Common myeloid progenitor, CD34-positive (primary cell): ENCODE measurements at regions of chr11 and their contacts with region 1.

Region 1: DNA sequence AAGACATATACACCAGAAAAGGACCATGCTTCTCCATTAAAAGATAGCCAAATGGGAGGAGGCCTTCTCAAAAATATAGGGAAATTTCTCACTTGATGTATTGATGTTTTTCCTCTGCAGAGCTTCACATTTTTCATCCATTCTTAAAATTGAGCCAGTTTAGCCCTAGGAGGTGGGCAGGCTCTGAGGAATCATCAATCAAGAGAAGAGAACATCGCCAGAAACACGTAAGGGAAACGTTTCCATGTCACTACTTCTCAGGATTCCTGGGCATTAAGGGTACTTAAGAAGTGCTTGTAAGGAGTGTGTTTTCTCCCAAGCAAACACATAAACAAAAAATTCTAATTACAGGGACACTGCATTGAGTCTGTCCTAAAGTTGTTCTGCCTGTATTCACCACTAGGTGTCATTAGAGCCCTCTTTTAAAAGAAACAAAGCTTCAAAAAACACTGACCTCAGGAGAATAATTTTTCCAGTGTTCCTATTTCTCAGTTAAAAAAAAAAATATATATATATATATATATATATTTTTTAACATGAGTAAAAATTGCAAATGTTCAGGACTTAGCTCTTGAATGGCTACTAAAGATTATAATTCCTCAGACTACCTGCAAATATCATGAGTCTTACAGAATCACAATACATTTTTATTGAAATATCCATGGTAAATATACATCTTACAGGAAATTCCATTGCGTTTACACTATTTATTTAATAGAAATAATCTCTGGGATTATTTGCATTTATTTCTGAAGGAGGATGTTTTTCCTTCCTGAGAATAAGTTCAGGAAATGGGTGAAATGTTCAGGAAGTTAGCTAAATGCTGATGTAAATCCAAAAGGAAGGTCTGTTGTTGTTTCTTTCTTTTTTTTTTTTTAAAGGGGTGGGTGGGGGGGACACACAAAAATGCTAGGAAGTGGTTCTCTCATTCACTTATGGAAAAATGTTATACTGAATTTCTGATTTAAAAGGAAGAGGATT is 16.0 kb downstream of the FZD4 start:
- DNase-seq: peak; percentile 52 to 76 (median 66)
- H3K4me3 ChIP-seq: no peak overlapping the region
- H3K27ac ChIP-seq: peak overlapping the region in 1 of 2 experiments; percentile 38
- H3K4me1 ChIP-seq: no peaks in the 10 kb centered on the region
- H3K27me3 ChIP-seq: no peaks in the 10 kb centered on the region

Region 2: GRCh38 chr11:86559311-86559945 is 379.8 kb before region 1 on chr11:
- CTCF ChIA-PET with region 1: no interaction called
- POLR2A ChIA-PET with region 1: no interaction called
- DNase-seq: no peak
- H3K4me3 ChIP-seq: no peak overlapping the region
- H3K27ac ChIP-seq: no peak overlapping the region
- H3K4me1 ChIP-seq: no peaks in the 10 kb centered on the region
- H3K27me3 ChIP-seq: no peaks in the 10 kb centered on the region

Region 3: GRCh38 chr11:86955361-86956120 is 16.4 kb after region 1 on chr11 and contains the start of gene FZD4:
- CTCF ChIA-PET with region 1: interaction called, 18 read pairs
- POLR2A ChIA-PET with region 1: no interaction called
- DNase-seq: peak; percentile 71 to 86 (median 79)
- H3K4me3 ChIP-seq: peak within 1 kb of the TSS; percentile 38 to 90 (median 72)
- H3K27ac ChIP-seq: no peak within 1 kb of the TSS
- H3K4me1 ChIP-seq: peaks cover 0 to 25% (median 19%) of the 10 kb centered on the region in 4 experiments
- H3K27me3 ChIP-seq: peaks cover 4 to 42% (median 11%) of the 10 kb centered on the region in 5 experiments

Region 4: GRCh38 chr11:86990515-86990914 is 51.3 kb after region 1 on chr11:
- CTCF ChIA-PET with region 1: interaction called, 20 read pairs
- POLR2A ChIA-PET with region 1: no interaction called
- DNase-seq: no peak
- H3K4me3 ChIP-seq: no peak overlapping the region
- H3K27ac ChIP-seq: no peak overlapping the region
- H3K4me1 ChIP-seq: no peaks in the 10 kb centered on the region
- H3K27me3 ChIP-seq: no peaks in the 10 kb centered on the region

Region 5: DNA sequence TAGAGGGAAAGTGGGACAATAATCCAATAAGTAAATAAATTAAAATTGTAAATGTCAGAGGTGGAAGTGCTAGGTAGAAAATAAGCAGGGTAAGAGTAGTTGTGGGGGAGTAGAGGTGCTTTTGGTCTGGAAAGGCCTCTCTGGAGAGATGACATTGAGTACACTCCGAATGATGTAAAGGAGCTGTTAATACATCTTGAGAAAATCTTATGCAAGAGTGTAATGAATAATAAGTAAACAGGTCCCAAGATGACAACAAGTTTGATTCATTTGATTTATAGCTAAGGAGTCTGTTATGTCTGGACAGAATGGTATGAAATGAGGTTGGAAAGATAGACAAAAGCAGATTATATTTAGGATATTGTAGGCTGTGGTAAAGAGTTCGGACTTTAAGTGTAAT is 186.1 kb after region 1 on chr11:
- CTCF ChIA-PET with region 1: no interaction called
- POLR2A ChIA-PET with region 1: no interaction called
- DNase-seq: no peak
- H3K4me3 ChIP-seq: no peak overlapping the region
- H3K27ac ChIP-seq: no peak overlapping the region
- H3K4me1 ChIP-seq: no peaks in the 10 kb centered on the region
- H3K27me3 ChIP-seq: no peaks in the 10 kb centered on the region

Region 6: GRCh38 chr11:87284306-87284705 is 345.1 kb after region 1 on chr11:
- CTCF ChIA-PET with region 1: interaction called, 12 read pairs
- POLR2A ChIA-PET with region 1: no interaction called
- DNase-seq: no peak
- H3K4me3 ChIP-seq: no peak overlapping the region
- H3K27ac ChIP-seq: no peak overlapping the region
- H3K4me1 ChIP-seq: no peaks in the 10 kb centered on the region
- H3K27me3 ChIP-seq: no peaks in the 10 kb centered on the region

Region 7: DNA sequence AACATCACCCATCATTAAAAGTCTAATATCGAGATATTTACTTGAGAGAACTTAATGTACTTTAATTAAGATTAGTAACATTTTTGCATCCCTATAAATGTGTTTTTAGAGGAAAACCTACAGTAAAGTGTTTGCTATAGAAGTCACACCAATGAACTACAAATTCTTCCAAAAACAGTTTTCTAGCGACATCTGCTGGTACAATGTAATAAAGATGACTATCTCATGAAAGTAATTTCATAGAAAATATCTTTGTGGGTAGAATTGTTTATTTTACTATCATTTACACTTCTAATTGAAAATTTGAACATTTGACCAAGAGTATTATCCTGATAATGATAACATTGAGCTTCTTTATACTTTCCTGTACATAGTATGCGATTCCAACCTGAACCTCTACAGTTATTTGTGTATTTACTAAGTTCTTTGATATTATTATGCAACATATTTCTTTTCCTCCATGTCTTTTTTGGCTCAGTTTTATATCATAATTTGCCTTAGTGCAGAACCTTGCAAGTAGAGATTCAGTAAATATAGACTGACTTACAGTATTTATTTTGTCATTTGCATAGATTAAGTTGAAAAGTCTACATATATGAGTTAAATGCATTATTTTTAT is 351.2 kb after region 1 on chr11:
- CTCF ChIA-PET with region 1: interaction called, 12 read pairs
- POLR2A ChIA-PET with region 1: no interaction called
- DNase-seq: peak; percentile 63 to 79 (median 73)
- H3K4me3 ChIP-seq: no peak overlapping the region
- H3K27ac ChIP-seq: no peak overlapping the region
- H3K4me1 ChIP-seq: no peaks in the 10 kb centered on the region
- H3K27me3 ChIP-seq: no peaks in the 10 kb centered on the region

Region 8: DNA sequence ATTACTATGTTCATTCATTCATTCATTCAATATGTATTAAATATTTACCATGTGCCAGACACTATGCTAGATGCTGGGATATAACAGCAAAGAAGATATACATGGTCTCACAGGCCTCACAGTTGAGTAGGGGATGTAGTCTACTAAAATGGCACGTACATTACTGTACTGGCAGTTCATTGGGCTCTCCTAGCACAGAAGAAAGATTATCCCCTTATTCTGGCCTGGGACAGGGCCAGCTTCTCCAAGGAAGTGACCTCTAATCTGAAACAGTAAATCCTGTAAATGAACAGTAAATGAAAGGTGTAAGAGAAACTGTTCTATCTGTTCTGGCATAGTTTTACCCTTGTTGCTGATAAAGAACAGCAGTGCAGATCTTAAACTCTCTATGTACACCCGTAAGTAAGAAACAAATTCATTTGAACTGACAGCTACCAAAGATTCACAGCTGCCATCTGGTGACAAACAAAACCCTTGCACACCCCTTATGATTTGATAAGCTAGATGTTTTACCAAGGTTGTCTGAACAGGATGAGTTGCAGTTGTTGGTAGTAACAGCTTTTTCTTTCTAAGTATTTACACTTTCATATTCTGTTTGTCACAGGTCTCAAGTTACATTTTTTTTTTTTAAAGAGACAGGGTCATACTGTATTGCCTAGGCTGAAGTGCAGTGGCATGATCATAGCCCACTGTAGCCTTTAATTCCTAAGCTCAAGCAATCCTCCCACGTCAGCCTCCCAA is 361.6 kb after region 1 on chr11:
- CTCF ChIA-PET with region 1: interaction called, 10 read pairs
- POLR2A ChIA-PET with region 1: no interaction called
- DNase-seq: peak in 2 of 3 donors; percentile 19 to 55
- H3K4me3 ChIP-seq: no peak overlapping the region
- H3K27ac ChIP-seq: no peak overlapping the region
- H3K4me1 ChIP-seq: no peaks in the 10 kb centered on the region
- H3K27me3 ChIP-seq: no peaks in the 10 kb centered on the region

Region 9: GRCh38 chr11:87421422-87421821 is 482.2 kb after region 1 on chr11:
- CTCF ChIA-PET with region 1: interaction called, 28 read pairs
- POLR2A ChIA-PET with region 1: no interaction called
- DNase-seq: peak; percentile 76 to 86 (median 79)
- H3K4me3 ChIP-seq: no peak overlapping the region
- H3K27ac ChIP-seq: no peak overlapping the region
- H3K4me1 ChIP-seq: no peaks in the 10 kb centered on the region
- H3K27me3 ChIP-seq: no peaks in the 10 kb centered on the region